AG04450 (cell line): ENCODE measurements at regions of chr10 and their contacts with region 1.

Region 1: DNA sequence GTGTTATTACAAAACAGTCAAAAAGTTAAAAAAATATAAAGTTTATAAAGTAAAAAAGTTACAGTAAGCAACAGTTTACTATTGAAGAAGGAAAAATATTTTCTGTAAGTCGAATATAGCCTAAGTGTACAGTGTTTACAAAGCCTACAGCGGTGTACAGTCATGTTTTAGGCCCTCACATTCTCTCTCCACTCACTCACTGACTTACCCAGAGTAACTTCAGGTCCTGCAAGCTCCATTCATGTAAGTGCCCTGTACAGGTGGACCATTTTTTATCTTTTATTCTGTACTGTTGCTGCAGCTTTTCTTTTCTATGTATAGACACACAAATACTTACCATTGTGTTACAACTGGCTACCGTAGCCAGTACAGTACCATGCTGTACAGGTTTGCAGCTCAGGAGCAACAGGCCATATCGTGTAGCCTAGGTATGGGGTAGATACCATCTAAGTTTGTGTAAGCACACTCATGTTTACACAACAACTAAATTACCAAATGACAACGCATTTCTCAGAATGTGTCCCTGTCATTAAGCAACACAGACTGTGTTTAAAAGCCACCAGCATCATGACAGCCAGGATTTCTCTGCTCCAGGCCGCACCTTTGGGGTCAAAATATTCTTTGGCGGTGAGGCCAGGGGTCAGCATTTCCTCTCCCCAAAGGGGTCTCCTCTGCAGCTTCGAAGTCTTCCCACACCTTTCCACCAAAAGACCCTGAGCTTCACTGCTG is 67.2 kb downstream of the DLG5 start:
- DNase-seq: no peak
- H3K4me3 ChIP-seq: no peak overlapping the region
- H3K27ac ChIP-seq: no peak overlapping the region
- H3K27me3 ChIP-seq: no peaks in the 10 kb centered on the region
- CTCF ChIP-seq: no peak

Region 2: DNA sequence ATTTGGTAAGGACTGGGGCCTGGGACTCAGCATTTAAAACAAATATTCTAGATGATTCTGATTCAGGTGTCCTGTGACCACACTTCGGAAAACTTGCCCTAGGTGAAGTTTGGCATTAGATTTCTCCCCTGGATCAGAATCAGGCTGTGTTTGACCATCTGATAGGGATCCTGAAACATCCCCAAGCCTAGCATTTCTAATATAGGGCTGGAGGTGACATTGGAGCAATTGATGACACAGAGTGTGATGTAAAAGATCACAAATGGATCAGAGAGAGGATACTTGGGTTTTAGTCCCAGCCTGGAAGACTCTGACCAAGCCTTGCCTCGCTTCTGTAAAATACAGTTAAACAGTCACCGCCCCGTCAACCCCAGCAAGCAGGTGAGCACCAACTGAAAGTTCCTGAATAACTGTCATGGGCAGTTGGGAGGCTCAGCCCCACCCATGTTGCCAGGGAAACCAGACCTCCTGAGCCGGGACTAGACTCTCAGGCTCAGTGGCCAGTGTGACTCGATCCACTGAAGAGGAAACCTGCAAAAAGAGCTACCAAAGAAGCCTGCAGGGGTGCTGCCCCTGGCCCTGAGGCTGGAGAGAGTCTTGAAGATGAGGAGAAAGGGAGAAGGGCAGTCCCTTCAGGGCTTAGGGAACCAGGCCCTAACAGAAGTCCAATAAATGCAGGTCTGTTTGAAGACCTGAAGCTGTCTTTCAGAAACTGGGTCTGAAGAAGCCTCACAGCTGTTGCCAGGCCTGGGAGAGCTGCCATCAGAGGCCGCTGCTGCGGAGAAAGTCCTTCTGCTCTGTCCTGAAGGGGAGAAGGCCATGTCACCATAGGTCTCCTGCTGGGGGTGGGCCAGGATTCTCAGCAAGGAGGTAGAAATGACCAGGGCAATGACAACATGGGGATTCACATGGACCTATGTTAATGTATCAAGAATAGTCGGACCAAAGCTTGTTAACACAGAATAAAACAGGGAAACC is 95.6 kb before region 1 on chr10:
- CTCF ChIA-PET with region 1: no interaction called
- POLR2A ChIA-PET with region 1: no interaction called
- DNase-seq: no peak
- H3K4me3 ChIP-seq: no peak overlapping the region
- H3K27ac ChIP-seq: no peak overlapping the region
- H3K27me3 ChIP-seq: no peaks in the 10 kb centered on the region
- CTCF ChIP-seq: peak; percentile 13

Region 3: GRCh38 chr10:77827383-77827782 is 32.0 kb before region 1 on chr10:
- CTCF ChIA-PET with region 1: no interaction called
- POLR2A ChIA-PET with region 1: no interaction called
- DNase-seq: no peak
- H3K4me3 ChIP-seq: no peak overlapping the region
- H3K27ac ChIP-seq: no peak overlapping the region
- H3K27me3 ChIP-seq: no peaks in the 10 kb centered on the region
- CTCF ChIP-seq: no peak

Region 4: GRCh38 chr10:77846718-77847630 is 12.4 kb before region 1 on chr10:
- CTCF ChIA-PET with region 1: interaction called, 10 read pairs
- POLR2A ChIA-PET with region 1: interaction called, 4 read pairs
- DNase-seq: peak; percentile 51
- H3K4me3 ChIP-seq: no peak overlapping the region
- H3K27ac ChIP-seq: peak overlapping the region; percentile 39
- H3K27me3 ChIP-seq: no peaks in the 10 kb centered on the region
- CTCF ChIP-seq: peak; percentile 97